ENCODE measurements at regions of chr5 and their contacts with region 1.

Region 1: GRCh38 chr5:179763215-179763945 is 30.4 kb upstream of the LTC4S start:
- DNase-seq: peak; percentile 68 to 91 (median 80)
- H3K4me3 ChIP-seq: peak overlapping the region in 1 of 4 donors; percentile 21
- H3K27ac ChIP-seq: peak overlapping the region in 4 of 5 donors; percentile 29 to 86 (median 70)
- H3K4me1 ChIP-seq: peaks cover 46 to 78% of the 10 kb centered on the region in 2 donors
- H3K27me3 ChIP-seq: no peaks in the 10 kb centered on the region
- CTCF ChIP-seq: peak; percentile 86 to 96 (median 90)
- POLR2A ChIP-seq: no peak

Region 2: GRCh38 chr5:179450961-179451827 is 312.2 kb before region 1 on chr5:
- intact Hi-C with region 1: no loop called
- DNase-seq: no peak
- H3K4me3 ChIP-seq: no peak overlapping the region
- H3K27ac ChIP-seq: no peak overlapping the region
- H3K4me1 ChIP-seq: no peaks in the 10 kb centered on the region
- H3K27me3 ChIP-seq: no peaks in the 10 kb centered on the region
- CTCF ChIP-seq: no peak
- POLR2A ChIP-seq: no peak

Region 3: GRCh38 chr5:179795863-179796833 is 32.8 kb after region 1 on chr5:
- intact Hi-C with region 1: loop called in 1 of 2 experiments (anchors 5 kb)
- DNase-seq: peak; percentile 78 to 87 (median 84)
- H3K4me3 ChIP-seq: peak overlapping the region in 2 of 4 donors; percentile 59 to 64
- H3K27ac ChIP-seq: peak overlapping the region; percentile 63 to 88 (median 85)
- H3K4me1 ChIP-seq: peaks cover 10 to 42% of the 10 kb centered on the region in 2 donors
- H3K27me3 ChIP-seq: no peaks in the 10 kb centered on the region
- CTCF ChIP-seq: peak; percentile 19 to 96 (median 64)
- POLR2A ChIP-seq: peak; percentile 48 to 53